Colonic mucosa (tissue), 4 donors: ENCODE measurements at regions of chr11 and their contacts with region 1.

Region 1: DNA sequence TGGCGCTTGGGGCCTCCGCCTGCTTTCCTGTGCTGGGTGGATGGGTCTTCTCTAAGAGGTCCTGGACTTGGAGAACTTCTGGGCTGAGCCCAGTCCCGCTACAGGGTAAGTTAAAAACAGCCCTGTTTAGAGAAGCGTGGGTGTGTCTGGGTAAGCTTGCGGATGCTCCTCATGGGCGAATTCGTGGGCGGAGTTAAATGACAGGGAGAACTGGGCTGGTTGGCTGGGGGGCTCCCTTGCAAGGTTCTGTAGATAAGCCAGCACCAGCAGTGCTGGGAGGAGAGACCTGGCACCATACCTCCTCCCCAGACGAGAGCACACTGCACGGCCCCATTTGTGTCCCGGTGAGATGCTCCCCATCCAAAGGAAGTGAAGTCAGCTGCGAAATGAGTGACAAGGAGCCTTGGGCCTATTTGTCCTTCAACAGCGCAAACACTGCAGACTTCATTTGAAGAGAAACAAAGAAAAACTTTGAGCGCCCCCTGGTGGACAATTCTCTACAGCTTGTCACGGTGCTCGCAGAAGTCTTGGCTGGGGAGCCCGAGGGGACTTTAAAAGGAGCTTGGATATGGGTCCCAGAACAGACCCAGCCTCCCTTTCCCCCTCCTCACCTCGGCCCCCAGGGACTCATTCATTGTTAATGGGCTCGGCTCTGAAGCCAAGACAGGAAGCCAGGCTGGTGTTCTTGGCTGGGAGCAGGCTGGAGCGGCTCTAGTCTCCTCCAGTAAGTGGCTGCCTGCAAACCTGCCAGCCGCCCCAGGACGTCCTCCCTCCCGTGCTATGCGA is 39.5 kb downstream of the TP53I11 start:
- DNase-seq: peak; percentile 91
- H3K4me3 ChIP-seq: no peak overlapping the region
- H3K27ac ChIP-seq: no peak overlapping the region
- H3K4me1 ChIP-seq: no peaks in the 10 kb centered on the region
- H3K27me3 ChIP-seq: no peaks in the 10 kb centered on the region
- CTCF ChIP-seq: peak; percentile 80

Region 2: DNA sequence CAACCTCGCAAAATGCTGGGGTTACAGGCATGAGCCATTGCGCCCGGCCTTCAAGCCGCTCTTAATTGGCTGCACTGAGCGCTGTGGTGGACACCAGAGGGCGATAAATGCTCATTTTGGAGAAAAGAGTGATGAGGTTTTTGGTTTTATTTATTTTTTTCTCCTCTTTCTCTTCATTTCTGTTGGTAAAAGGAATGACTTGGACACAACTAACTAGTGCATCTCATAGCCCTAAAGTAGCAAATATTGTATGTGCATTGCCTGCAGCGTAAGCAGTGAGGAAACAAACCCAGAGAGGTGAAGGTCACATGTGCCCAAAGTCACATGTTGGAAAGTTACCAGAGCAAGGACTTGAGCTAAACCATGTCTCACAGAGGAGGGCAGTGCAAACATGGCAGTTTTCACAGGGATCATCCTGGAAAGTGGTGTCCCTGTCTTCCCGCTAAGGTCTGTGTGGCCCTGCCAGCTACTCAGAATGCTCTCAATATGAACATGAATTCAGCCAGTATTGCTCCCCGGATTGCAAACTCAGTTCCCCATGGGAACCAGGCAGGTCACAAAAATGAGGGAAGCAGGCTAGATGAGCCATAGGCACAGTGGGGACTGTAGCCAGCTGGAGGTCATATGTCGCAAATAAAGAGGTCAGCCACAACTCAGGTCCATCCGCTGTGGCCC is 354.4 kb before region 1 on chr11:
- intact Hi-C with region 1: loop called (anchors 5 kb)
- DNase-seq: peak; percentile 72
- H3K4me3 ChIP-seq: no peak overlapping the region
- H3K27ac ChIP-seq: no peak overlapping the region
- H3K4me1 ChIP-seq: no peaks in the 10 kb centered on the region
- H3K27me3 ChIP-seq: no peaks in the 10 kb centered on the region
- CTCF ChIP-seq: peak; percentile 69

Region 3: GRCh38 chr11:44877571-44878497 is 33.4 kb before region 1 on chr11:
- intact Hi-C with region 1: no loop called
- DNase-seq: no peak
- H3K4me3 ChIP-seq: no peak overlapping the region
- H3K27ac ChIP-seq: no peak overlapping the region
- H3K4me1 ChIP-seq: no peaks in the 10 kb centered on the region
- H3K27me3 ChIP-seq: no peaks in the 10 kb centered on the region
- CTCF ChIP-seq: no peak

Region 4: DNA sequence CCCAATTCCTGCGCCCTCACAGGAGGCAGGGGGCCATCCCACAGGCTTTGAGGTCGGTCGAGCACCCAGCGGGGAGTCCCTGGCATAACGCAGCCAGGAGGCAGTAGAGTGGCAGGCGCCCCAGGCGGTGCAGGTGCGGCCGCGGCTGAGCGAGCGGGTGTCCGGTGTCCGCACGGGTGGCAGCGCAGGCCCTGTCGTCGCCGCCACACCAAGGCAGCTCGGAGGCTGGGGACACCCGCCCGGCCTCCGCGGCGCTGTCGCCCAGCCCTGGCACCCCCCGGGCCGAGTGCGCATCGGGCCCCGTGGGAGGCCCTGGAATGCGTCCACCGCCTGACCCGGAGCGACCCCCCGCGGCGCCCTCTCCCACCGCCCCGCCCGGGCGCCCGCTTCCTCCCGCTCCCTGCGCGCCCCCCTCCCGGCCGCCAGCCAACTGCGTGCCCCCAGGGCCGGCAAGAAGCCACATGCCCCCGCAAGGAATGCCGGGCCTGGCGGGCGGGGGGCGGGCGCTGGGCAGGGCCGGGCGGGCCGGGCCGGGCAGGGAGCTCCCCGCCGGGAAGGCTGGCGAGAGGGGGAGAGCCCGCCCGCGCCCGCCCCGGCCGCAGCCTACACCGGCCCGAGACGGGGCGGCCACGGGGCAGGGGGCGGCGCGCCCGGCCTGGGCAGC is 269.1 kb after region 1 on chr11:
- intact Hi-C with region 1: no loop called
- DNase-seq: peak; percentile 70
- H3K4me3 ChIP-seq: peak overlapping the region; percentile 38
- H3K27ac ChIP-seq: no peak overlapping the region
- H3K4me1 ChIP-seq: peaks cover 7% of the 10 kb centered on the region
- H3K27me3 ChIP-seq: no peaks in the 10 kb centered on the region
- CTCF ChIP-seq: peak; percentile 46